ENCODE measurements at regions of chr7 and their contacts with region 1.

Region 1: DNA sequence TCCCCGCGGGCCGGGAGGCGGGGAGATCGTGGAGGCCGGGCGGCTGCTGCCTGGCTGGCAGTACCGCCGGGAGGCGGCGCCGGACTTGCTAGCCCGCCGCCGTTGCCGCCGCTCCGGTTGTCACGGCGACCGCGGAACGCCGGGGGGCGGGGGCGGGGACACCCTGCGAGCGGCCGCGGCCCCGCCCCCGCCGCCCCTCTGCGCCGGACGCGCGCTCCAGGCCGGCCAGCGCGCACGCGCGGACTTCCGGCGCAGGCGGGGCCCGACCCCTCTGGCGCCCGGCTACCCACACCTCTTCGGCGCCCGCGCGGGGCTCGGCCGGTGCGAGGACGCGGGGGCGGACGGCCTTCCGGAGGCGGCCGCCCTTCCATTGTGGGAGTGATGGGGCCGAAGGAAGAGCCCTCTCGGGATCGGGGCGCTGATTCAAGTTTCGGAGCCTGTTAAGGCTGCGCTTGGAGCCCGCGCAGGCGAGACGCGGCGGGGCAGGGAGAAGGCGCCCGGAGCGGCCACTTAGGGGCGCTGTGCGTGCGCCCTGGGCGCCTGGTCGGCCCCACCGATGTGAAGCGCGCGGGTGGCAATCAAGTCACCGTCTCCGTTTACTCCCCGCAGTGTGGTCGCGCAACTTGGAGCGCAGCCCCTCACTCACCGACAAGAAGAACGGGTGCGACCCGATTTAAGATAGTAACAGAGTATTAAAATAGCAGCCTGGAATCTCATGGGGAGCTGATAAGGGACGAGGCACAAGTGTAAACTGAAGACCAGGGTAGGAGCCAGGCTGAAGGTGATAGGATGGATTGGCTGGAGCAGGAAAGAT is 448 bp upstream of the DPY19L1 start:
- DNase-seq: peak; percentile 95 to 97 (median 96)
- ATAC-seq: peak; percentile 86 to 94 (median 89)
- H3K4me3 ChIP-seq: peak overlapping the region; percentile 55 to 91 (median 76)
- H3K27ac ChIP-seq: peak overlapping the region; percentile 64 to 95 (median 90)
- H3K4me1 ChIP-seq: peaks cover 0 to 32% (median 24%) of the 10 kb centered on the region in 12 donors
- H3K27me3 ChIP-seq: no peaks in the 10 kb centered on the region
- CTCF ChIP-seq: peak; percentile 75 to 96 (median 86)
- POLR2A ChIP-seq: peak in 1 of 2 donors; percentile 48

Region 2: DNA sequence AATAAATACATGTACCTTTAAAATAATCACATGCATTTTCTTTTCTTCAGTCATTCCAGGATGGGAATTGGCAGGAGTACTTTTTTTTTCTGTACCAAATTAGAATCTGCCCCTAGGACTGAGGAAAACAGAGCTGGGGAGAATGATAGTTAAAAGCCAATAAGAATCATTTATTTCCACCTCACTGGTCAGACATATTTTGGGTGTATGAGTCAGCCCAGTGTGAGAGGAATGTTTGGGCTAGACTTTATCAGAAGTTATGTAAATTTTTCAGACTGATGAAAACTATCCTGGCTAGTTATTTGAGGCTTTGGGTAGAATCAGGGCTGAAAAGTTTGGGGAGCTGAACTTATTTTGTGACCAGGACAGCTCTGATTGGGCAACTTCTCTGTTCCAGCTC is 682.8 kb before region 1 on chr7:
- intact Hi-C with region 1: no loop called
- DNase-seq: no peak
- ATAC-seq: peak in 3 of 4 donors; percentile 55 to 66 (median 56)
- H3K4me3 ChIP-seq: no peak overlapping the region
- H3K27ac ChIP-seq: peak overlapping the region in 3 of 12 donors; percentile 26 to 57 (median 32)
- H3K4me1 ChIP-seq: peaks cover 0 to 13% (median 4%) of the 10 kb centered on the region in 12 donors
- H3K27me3 ChIP-seq: no peaks in the 10 kb centered on the region
- CTCF ChIP-seq: no peak
- POLR2A ChIP-seq: no peak

Region 3: DNA sequence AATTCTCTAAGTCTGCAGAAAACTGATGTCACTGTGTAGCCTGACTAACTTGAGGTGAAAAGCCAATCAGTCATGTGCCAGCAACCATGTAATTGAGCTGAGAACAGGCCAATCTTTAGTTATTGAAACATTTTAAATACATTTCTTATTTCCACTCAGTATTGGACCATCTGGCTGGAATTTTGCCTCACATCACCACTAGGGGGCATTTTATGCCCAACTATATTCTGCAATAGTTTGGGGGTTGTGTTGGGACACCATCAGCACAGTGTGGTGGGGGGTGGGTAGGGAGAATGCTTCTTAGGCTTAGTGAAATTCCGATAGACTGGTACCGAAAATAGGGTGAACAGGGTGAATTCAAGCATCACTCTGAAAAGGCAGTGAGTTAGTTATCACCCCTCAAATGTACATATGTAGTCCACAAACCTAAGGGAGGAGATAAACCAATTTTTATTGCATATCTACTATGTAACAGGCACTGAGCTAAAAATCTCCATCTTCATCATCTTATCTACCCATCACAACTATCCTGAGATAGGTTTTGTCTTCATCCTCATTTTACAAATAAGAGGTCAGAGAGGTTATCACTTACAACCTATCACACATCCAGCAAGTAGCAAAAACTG is 361.9 kb before region 1 on chr7:
- intact Hi-C with region 1: loop called in 3 of 10 experiments (anchors 5 to 10 kb)
- DNase-seq: no peak
- ATAC-seq: peak in 2 of 4 donors; percentile 57 to 65
- H3K4me3 ChIP-seq: no peak overlapping the region
- H3K27ac ChIP-seq: no peak overlapping the region
- H3K4me1 ChIP-seq: no peaks in the 10 kb centered on the region
- H3K27me3 ChIP-seq: no peaks in the 10 kb centered on the region
- CTCF ChIP-seq: peak; percentile 40 to 63 (median 48)
- POLR2A ChIP-seq: no peak

Region 4: GRCh38 chr7:34747867-34748727 is 289.6 kb before region 1 on chr7:
- intact Hi-C with region 1: loop called in 3 of 10 experiments (anchors 5 to 10 kb)
- DNase-seq: peak; percentile 78 to 91 (median 79)
- ATAC-seq: peak; percentile 96 to 98 (median 98)
- H3K4me3 ChIP-seq: no peak overlapping the region
- H3K27ac ChIP-seq: peak overlapping the region in 11 of 12 donors; percentile 30 to 87 (median 72)
- H3K4me1 ChIP-seq: peaks cover 0 to 18% (median 2%) of the 10 kb centered on the region in 12 donors
- H3K27me3 ChIP-seq: no peaks in the 10 kb centered on the region
- CTCF ChIP-seq: peak in 2 of 12 donors; percentile 6 to 12
- POLR2A ChIP-seq: no peak

Region 5: GRCh38 chr7:34759452-34760125 is 278.1 kb before region 1 on chr7:
- intact Hi-C with region 1: loop called in 2 of 10 experiments (anchors 10 kb)
- DNase-seq: no peak
- ATAC-seq: peak in 3 of 4 donors; percentile 50 to 70 (median 50)
- H3K4me3 ChIP-seq: no peak overlapping the region
- H3K27ac ChIP-seq: no peak overlapping the region
- H3K4me1 ChIP-seq: no peaks in the 10 kb centered on the region
- H3K27me3 ChIP-seq: no peaks in the 10 kb centered on the region
- CTCF ChIP-seq: peak; percentile 25 to 59 (median 46)
- POLR2A ChIP-seq: no peak

Region 6: DNA sequence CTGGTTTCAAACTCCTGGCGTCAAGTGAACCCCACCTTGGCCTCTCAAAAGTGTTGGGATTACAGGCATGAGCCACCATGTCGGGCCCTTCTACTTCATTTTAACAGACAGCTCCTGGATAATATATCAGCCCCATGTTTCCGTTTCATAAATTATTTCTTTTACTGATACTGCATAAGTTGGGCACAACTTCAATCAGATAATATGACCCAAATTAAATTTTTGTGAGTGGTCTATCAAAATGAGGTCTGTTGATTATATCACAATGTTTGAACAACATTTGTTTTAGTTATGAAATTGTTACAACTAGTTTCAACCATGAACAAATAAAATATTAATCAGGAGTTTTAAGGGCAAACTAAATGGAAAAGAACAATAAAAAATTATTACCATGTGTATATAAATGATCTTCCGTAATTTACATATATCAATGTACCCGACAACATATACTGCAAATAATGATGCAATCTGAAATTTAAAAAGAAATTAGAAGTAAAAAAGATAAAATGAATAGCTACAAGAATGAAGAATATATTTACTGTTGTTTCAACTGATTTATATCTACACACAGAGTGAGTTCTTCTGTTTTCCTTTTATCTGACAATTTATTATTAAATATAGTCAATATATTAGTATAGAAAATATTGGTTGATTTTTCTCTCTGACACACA is 71.1 kb before region 1 on chr7:
- intact Hi-C with region 1: loop called in 1 of 10 experiments (anchors 10 kb)
- DNase-seq: no peak
- ATAC-seq: no peak
- H3K4me3 ChIP-seq: no peak overlapping the region
- H3K27ac ChIP-seq: no peak overlapping the region
- H3K4me1 ChIP-seq: peaks cover 0 to 3% (median 0%) of the 10 kb centered on the region in 12 donors
- H3K27me3 ChIP-seq: no peaks in the 10 kb centered on the region
- CTCF ChIP-seq: no peak
- POLR2A ChIP-seq: no peak